Common myeloid progenitor, CD34-positive (primary cell): ENCODE measurements at regions of chr19 and their contacts with region 1.

Region 1: GRCh38 chr19:42028304-42029216 is 34.5 kb upstream of the ATP1A3 start:
- DNase-seq: peak in 1 of 3 donors; percentile 2
- H3K4me3 ChIP-seq: no peak overlapping the region
- H3K27ac ChIP-seq: no peak overlapping the region
- H3K4me1 ChIP-seq: no peaks in the 10 kb centered on the region
- H3K27me3 ChIP-seq: no peaks in the 10 kb centered on the region

Region 2: DNA sequence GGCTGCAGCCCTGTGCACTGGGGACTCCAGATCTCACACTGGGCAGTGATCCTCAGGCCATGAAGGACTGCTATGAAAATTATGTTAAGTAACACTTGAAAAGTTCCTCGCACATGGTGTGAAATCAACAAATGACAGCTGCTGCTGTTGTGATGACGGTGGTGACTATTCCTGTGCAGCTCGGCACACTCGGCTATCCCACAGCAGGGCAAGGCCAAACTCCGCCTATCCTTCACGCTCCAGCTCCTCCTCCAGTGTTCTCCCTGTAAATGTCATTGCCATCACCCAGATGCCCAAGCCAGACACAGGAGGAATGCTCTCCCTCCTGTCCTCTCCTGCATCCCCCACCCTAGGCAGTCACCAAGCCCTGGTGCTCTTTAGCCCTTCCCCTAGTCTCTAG is 10.1 kb after region 1 on chr19:
- CTCF ChIA-PET with region 1: interaction called, 17 read pairs
- POLR2A ChIA-PET with region 1: interaction called, 3 read pairs
- DNase-seq: no peak
- H3K4me3 ChIP-seq: no peak overlapping the region
- H3K27ac ChIP-seq: no peak overlapping the region
- H3K4me1 ChIP-seq: no peaks in the 10 kb centered on the region
- H3K27me3 ChIP-seq: no peaks in the 10 kb centered on the region

Region 3: DNA sequence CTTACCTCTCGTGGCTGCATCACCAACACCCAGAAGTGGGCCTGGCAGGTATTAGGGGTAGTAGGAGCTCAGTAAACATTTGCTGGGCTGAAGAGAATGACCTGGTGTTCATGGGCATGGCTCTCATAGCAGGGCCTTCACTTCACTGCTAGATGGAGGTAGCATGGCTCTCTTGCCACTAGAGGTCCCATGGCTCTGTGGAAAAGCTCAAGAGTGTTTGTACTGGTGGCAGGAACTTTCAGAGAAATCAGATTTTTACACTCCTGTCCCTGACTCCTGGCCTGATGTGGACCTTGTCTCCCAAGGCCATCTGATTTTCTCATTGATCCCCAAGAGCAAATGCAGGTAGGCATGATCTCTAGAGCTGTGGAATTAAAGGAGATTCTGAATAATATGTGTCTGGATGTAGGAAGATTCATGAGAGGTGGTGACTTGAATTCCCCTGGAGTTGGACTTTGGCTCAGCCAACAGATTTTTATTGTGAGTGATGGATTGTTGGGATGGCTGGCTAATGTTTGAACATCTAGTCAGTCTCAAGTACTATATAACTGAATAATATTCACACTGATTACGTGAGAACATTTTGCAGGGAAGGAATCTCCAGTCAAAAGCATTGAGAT is 53.1 kb after region 1 on chr19:
- CTCF ChIA-PET with region 1: no interaction called
- POLR2A ChIA-PET with region 1: no interaction called
- DNase-seq: peak in 2 of 3 donors; percentile 73 to 75
- H3K4me3 ChIP-seq: no peak overlapping the region
- H3K27ac ChIP-seq: peak overlapping the region in 1 of 2 experiments; percentile 19
- H3K4me1 ChIP-seq: peaks cover 6 to 18% (median 16%) of the 10 kb centered on the region in 4 experiments
- H3K27me3 ChIP-seq: no peaks in the 10 kb centered on the region